ENCODE measurements at regions of chr1 and their contacts with region 1.

Region 1: GRCh38 chr1:234772345-234773147 is 162.6 kb upstream of the IRF2BP2 start:
- DNase-seq: peak; percentile 59 to 95 (median 85)
- ATAC-seq: peak; percentile 80
- H3K4me3 ChIP-seq: peak overlapping the region in 1 of 2 experiments; percentile 23
- H3K4me3 Mint-ChIP-seq: peak overlapping the region; percentile 66
- H3K27ac ChIP-seq: peak overlapping the region; percentile 39 to 73
- H3K27ac Mint-ChIP-seq: peak overlapping the region; percentile 94
- H3K4me1 ChIP-seq: peaks cover 58% of the 10 kb centered on the region
- H3K4me1 Mint-ChIP-seq: peaks cover 54% of the 10 kb centered on the region
- H3K27me3 ChIP-seq: no peaks in the 10 kb centered on the region
- H3K27me3 Mint-ChIP-seq: no peaks in the 10 kb centered on the region
- CTCF ChIP-seq: no peak

Region 2: GRCh38 chr1:234409328-234409727 is 363.2 kb before region 1 on chr1:
- CTCF ChIA-PET with region 1: no interaction called
- POLR2A ChIA-PET with region 1: no interaction called
- intact Hi-C with region 1: no loop called
- DNase-seq: peak in 2 of 9 experiments; percentile 14 to 51
- ATAC-seq: peak; percentile 40
- H3K4me3 ChIP-seq: no peak overlapping the region
- H3K4me3 Mint-ChIP-seq: no peak overlapping the region
- H3K27ac ChIP-seq: no peak overlapping the region
- H3K27ac Mint-ChIP-seq: peak overlapping the region; percentile 66
- H3K4me1 ChIP-seq: no peaks in the 10 kb centered on the region
- H3K4me1 Mint-ChIP-seq: peaks cover 7% of the 10 kb centered on the region
- H3K27me3 ChIP-seq: no peaks in the 10 kb centered on the region
- H3K27me3 Mint-ChIP-seq: no peaks in the 10 kb centered on the region
- CTCF ChIP-seq: no peak

Region 3: DNA sequence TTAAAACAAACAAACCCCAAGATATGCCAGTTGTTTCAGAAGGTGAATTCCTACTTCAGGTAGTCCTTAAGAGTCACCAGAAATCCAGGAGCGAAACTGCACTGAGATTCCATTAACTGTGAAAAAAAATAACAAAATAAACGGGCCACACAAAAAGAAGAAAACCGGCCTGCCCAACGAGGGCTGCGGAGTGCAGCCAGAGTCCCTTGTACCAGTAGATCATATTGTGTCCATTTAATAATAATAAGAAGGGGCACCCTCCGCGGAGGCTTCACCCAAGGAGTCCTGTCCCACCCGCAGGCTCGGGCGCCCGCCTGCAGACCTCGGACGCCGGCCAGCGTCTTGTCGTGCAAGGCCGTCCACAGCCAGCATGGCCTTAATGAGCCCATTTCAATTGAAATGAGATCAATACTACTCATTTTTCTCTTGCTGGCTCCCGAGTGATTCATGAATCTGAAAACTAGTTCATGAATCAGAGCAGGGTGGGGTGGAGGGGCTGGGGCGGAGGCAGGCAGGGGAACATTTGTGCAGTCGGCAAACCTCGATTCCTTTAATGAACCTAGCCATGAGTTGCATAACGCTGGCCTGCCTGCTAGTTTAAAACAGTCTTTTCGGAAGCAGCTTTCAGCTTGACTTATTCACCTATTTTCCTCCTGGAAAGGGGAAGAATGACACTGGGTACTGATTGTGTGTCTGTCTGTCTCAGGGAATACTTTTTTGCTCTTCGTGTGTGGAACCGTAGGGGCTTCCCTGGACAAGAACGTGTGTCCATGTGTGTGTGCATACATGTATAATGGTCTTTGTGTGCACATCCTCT is 49.4 kb before region 1 on chr1:
- CTCF ChIA-PET with region 1: interaction called, 5 read pairs
- POLR2A ChIA-PET with region 1: interaction called, 22 read pairs
- intact Hi-C with region 1: loop called (anchors 1 to 2 kb)
- DNase-seq: peak in 8 of 9 experiments; percentile 37 to 76 (median 58)
- ATAC-seq: peak; percentile 26
- H3K4me3 ChIP-seq: peak overlapping the region; percentile 28 to 34
- H3K4me3 Mint-ChIP-seq: peak overlapping the region; percentile 71
- H3K27ac ChIP-seq: peak overlapping the region; percentile 83 to 96
- H3K27ac Mint-ChIP-seq: peak overlapping the region; percentile 92
- H3K4me1 ChIP-seq: peaks cover 38% of the 10 kb centered on the region
- H3K4me1 Mint-ChIP-seq: peaks cover 61% of the 10 kb centered on the region
- H3K27me3 ChIP-seq: no peaks in the 10 kb centered on the region
- H3K27me3 Mint-ChIP-seq: no peaks in the 10 kb centered on the region
- CTCF ChIP-seq: no peak

Region 4: DNA sequence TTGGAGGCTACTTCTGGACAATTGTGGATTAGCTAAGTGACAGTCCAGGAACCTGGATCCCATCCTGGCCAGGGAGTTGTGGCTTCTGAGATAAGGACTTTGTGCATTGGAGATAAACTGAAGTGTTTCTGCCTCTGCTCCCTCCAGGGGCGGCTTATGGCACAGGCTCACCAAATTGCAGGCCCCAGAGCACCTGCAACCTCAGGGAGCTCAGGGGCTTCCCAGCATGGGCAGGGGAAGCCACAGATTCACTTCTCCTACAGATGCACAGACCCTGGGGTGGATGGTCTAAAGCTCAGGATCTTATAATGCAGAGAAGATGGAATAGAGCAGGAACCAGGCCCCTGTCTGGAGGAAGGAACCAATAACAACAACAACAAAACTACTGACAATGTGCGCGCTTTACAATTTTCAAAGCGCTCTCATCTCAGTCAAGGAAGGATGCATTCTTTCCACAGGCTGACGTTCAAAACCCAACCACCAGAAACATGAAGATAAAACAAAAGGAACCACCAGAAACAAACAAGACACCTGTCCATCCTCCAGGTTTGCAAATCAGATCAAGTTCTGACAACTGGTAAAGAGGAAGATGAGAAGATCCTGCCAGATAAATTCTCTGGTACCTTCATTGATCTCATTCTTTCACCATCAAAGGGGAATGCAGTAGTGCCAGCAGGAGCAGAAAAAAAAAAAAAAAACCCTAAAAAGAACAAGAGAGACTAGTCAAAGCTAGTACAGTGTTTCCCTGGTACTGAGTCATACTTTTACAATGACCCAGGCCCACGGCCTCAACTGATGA is 41.6 kb before region 1 on chr1:
- CTCF ChIA-PET with region 1: no interaction called
- POLR2A ChIA-PET with region 1: interaction called, 22 read pairs
- intact Hi-C with region 1: loop called in 1 of 2 experiments (anchors 1 kb)
- DNase-seq: peak in 7 of 9 experiments; percentile 4 to 81 (median 54)
- ATAC-seq: peak; percentile 77
- H3K4me3 ChIP-seq: no peak overlapping the region
- H3K4me3 Mint-ChIP-seq: peak overlapping the region; percentile 8
- H3K27ac ChIP-seq: peak overlapping the region in 1 of 2 experiments; percentile 43
- H3K27ac Mint-ChIP-seq: peak overlapping the region; percentile 72
- H3K4me1 ChIP-seq: peaks cover 37% of the 10 kb centered on the region
- H3K4me1 Mint-ChIP-seq: peaks cover 45% of the 10 kb centered on the region
- H3K27me3 ChIP-seq: no peaks in the 10 kb centered on the region
- H3K27me3 Mint-ChIP-seq: no peaks in the 10 kb centered on the region
- CTCF ChIP-seq: no peak

Region 5: GRCh38 chr1:234842726-234843641 is 70.4 kb after region 1 on chr1:
- CTCF ChIA-PET with region 1: no interaction called
- POLR2A ChIA-PET with region 1: no interaction called
- intact Hi-C with region 1: loop called in 1 of 2 experiments (anchors 5 kb)
- DNase-seq: peak; percentile 10 to 76 (median 51)
- ATAC-seq: peak; percentile 48
- H3K4me3 ChIP-seq: no peak overlapping the region
- H3K4me3 Mint-ChIP-seq: peak overlapping the region; percentile 49
- H3K27ac ChIP-seq: no peak overlapping the region
- H3K27ac Mint-ChIP-seq: peak overlapping the region; percentile 75
- H3K4me1 ChIP-seq: peaks cover 53% of the 10 kb centered on the region
- H3K4me1 Mint-ChIP-seq: peaks cover 57% of the 10 kb centered on the region
- H3K27me3 ChIP-seq: no peaks in the 10 kb centered on the region
- H3K27me3 Mint-ChIP-seq: no peaks in the 10 kb centered on the region
- CTCF ChIP-seq: no peak

Region 6: DNA sequence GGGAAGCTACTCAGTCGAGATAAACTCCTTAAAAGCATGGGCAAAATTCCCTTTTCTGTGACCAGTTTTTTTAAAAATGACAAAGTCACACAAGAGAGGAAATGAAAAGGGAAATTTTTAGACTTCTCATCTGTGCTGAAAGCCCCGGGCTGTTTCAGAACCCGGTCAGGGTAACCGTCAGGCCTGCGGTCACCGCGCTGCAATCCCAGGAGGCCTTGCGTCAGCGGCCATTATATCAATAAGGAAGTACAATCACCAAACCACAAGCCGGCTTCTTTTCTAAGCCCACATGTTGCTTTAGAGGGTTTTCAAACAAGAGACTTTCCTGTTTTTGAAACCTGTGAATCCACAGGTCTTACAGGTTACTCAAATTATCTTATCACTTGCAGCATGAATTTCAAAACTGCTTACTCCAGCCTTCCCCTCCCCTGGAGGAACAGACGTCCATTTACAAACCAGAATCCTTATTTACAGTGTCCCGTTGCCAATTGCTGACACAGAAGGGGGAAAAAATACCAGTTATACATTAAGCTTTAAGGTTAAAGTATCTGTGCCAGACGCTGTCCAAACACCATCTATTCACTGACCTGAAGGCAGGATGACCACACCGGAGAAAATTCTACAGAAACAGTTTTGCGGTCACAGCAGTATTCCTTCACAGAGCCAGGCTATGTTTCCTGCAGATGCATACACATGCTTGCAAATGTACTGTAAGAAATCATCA is 190.8 kb after region 1 on chr1:
- CTCF ChIA-PET with region 1: no interaction called
- POLR2A ChIA-PET with region 1: no interaction called
- intact Hi-C with region 1: loop called in 1 of 2 experiments (anchors 2 kb)
- DNase-seq: peak; percentile 58 to 97 (median 86)
- ATAC-seq: peak; percentile 85
- H3K4me3 ChIP-seq: peak overlapping the region in 1 of 2 experiments; percentile 16
- H3K4me3 Mint-ChIP-seq: peak overlapping the region; percentile 64
- H3K27ac ChIP-seq: peak overlapping the region; percentile 31 to 81
- H3K27ac Mint-ChIP-seq: peak overlapping the region; percentile 90
- H3K4me1 ChIP-seq: peaks cover 58% of the 10 kb centered on the region
- H3K4me1 Mint-ChIP-seq: peaks cover 62% of the 10 kb centered on the region
- H3K27me3 ChIP-seq: no peaks in the 10 kb centered on the region
- H3K27me3 Mint-ChIP-seq: no peaks in the 10 kb centered on the region
- CTCF ChIP-seq: no peak

Measured in CD8-positive, alpha-beta T cell (primary cell).